ENCODE measurements at regions of chr5 and their contacts with region 1.

Region 1: GRCh38 chr5:132466433-132467286 is 23.9 kb downstream of the IRF1 start:
- DNase-seq: peak; percentile 44
- ATAC-seq: peak; percentile 64
- H3K4me3 Mint-ChIP-seq: peak overlapping the region; percentile 55
- H3K27ac Mint-ChIP-seq: peak overlapping the region; percentile 54
- H3K4me1 Mint-ChIP-seq: peaks cover 92% of the 10 kb centered on the region
- H3K27me3 Mint-ChIP-seq: no peaks in the 10 kb centered on the region
- CTCF ChIP-seq: no peak

Region 2: GRCh38 chr5:132446669-132447068 is 20.0 kb before region 1 on chr5:
- CTCF ChIA-PET with region 1: interaction called, 5 read pairs
- POLR2A ChIA-PET with region 1: interaction called, 8 read pairs
- intact Hi-C with region 1: loop called (anchors 2 kb)
- DNase-seq: no peak
- ATAC-seq: no peak
- H3K4me3 Mint-ChIP-seq: no peak overlapping the region
- H3K27ac Mint-ChIP-seq: no peak overlapping the region
- H3K4me1 Mint-ChIP-seq: peaks cover 56% of the 10 kb centered on the region
- H3K27me3 Mint-ChIP-seq: no peaks in the 10 kb centered on the region
- CTCF ChIP-seq: no peak

Region 3: GRCh38 chr5:132456296-132457001 is 10.2 kb before region 1 on chr5:
- CTCF ChIA-PET with region 1: interaction called, 13 read pairs
- POLR2A ChIA-PET with region 1: interaction called, 56 read pairs
- intact Hi-C with region 1: loop called (anchors 1 kb)
- DNase-seq: peak; percentile 56
- ATAC-seq: peak; percentile 78
- H3K4me3 Mint-ChIP-seq: peak overlapping the region; percentile 75
- H3K27ac Mint-ChIP-seq: peak overlapping the region; percentile 99
- H3K4me1 Mint-ChIP-seq: peaks cover 92% of the 10 kb centered on the region
- H3K27me3 Mint-ChIP-seq: no peaks in the 10 kb centered on the region
- CTCF ChIP-seq: no peak

Region 4: DNA sequence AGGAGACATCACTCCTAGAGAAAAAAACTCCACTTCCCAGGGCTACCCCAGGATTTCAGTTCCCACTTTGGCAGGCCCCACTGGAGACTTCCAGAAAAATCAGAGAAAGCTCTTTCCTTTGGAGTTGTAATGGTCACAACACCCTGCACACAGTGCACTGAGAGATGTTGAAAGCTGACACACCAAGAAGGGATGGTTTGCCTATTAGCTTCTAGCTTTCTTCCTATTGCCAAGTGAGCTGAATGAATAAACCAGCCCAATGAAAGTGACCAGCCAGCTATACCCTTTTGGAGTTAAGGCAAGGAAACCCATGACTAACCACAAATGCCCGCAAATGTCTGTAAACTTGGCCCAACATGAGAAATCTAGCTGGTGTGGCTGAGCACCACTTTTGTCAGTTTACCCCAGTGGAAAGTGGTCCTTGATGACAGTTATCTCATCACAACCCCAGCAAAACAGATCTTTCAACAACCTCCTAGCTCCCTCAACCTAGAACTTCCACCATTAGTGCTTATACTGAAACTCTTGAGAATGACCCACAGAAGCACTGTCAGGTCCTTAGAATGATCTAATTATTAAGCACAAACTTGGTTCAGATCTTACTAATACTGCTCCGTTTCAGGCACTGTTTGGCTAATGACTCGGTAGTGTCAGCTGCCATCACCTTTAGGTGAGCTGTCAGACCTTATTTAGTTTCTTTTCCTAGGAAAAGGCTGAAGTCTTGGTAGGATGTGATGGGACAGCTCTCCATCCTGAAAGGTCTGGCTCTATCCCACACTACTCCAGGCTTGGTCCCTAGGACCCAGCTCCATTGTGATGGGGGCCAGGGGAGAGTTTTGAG is 12.7 kb after region 1 on chr5:
- CTCF ChIA-PET with region 1: interaction called, 13 read pairs
- POLR2A ChIA-PET with region 1: interaction called, 286 read pairs
- intact Hi-C with region 1: loop called (anchors 1 kb)
- DNase-seq: no peak
- ATAC-seq: no peak
- H3K4me3 Mint-ChIP-seq: no peak overlapping the region
- H3K27ac Mint-ChIP-seq: peak overlapping the region; percentile 83
- H3K4me1 Mint-ChIP-seq: peaks cover 73% of the 10 kb centered on the region
- H3K27me3 Mint-ChIP-seq: no peaks in the 10 kb centered on the region
- CTCF ChIP-seq: no peak

Measured in activated B cell treated with CpG ODN at 0.5 μM for 24 hours (primary cell).